Activated T-helper 2 cell treated with anti-CD3 and anti-CD28 coated beads, Interferon-gamma antibody, Interleukin-2, Interleukin-4, amounts not matched to agents 10 μg/mL and 5 μg/mL and 100 μg/mL, durations not matched to agents 14 hours and 24 hours and 36 hours (primary cell): ENCODE measurements at regions of chr10 and their contacts with region 1.

Region 1: GRCh38 chr10:131885391-131886161 is 15.2 kb upstream of the PPP2R2D start:
- DNase-seq: peak; percentile 73
- H3K4me3 Mint-ChIP-seq: no peak overlapping the region
- H3K27ac Mint-ChIP-seq: no peak overlapping the region
- H3K4me1 Mint-ChIP-seq: peaks cover 2% of the 10 kb centered on the region
- H3K27me3 Mint-ChIP-seq: peaks cover 10% of the 10 kb centered on the region

Region 2: DNA sequence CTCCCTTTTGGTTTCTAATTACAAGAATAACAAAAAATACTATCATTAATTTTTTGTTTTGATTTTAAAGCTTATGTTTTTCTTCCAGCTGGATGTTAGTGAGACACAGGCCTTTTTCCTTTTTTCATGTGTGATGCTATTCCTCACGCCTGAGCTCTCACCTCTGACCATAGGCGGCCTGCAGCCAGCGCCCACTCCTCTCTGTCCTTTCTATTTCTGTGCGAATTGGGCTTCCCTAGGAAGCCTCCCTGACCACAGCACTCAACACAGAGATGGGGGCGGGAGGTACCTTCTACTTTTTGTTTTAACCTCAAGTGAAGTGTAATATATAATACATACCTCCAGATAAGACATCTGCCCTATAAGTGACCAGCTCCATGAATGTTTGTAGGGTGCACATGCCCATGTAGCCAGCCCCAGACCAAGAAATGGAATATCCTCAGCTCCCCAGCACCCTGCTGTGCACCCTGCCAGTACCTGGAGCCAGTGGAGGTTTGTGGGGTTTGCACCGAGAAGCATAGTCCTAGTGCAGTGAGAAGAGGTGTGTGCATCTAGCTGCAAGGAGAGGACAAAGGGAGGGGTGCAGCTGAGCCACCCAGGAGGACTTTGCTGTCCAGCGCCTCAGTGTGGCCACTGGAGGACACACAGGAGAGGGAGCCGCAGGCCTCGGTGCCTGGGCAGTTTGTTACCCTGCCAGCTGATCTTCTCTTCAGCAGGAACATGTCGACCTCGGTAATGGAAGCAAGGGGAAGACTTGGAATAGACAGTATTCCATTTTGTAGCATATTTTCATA is 57.6 kb after region 1 on chr10:
- intact Hi-C with region 1: loop called (anchors 2 kb)
- DNase-seq: no peak
- H3K4me3 Mint-ChIP-seq: no peak overlapping the region
- H3K27ac Mint-ChIP-seq: no peak overlapping the region
- H3K4me1 Mint-ChIP-seq: peaks cover 4% of the 10 kb centered on the region
- H3K27me3 Mint-ChIP-seq: no peaks in the 10 kb centered on the region

Region 3: DNA sequence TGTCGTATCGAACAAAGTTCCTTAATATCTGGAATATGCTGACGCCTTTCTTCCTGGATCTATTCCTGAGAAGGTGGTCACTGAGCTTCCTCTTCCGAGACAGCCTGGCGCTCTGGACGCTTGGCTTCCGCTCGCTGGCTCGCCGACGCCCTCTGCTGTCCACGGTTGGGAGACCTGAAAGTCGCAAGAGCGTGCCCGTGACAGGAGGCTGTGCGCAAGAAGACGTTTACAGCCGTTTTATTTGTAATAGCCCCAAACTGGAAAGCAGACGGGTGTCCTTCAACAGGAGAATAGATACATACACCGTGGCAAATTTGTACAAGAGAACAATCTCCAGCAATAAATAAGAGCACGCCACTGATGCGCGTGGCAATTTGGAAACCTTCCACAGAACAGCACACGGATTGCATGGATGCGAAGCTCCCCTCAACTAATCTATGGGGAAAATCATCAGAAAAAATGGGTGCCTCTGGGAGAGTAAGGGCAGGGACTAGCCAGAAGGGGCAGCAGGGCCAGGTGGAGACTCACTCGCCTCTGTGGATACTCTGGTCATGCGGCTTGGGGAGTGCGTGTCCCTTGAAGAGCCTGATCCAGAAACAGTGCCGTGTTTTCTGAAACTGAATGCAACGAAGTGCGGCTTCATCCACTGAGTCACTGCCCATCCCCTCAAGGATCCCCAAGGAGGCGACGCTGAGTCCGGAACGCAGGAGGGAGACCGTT is 137.7 kb after region 1 on chr10:
- intact Hi-C with region 1: loop called (anchors 1 kb)
- DNase-seq: peak; percentile 59
- H3K4me3 Mint-ChIP-seq: no peak overlapping the region
- H3K27ac Mint-ChIP-seq: no peak overlapping the region
- H3K4me1 Mint-ChIP-seq: peaks cover 4% of the 10 kb centered on the region
- H3K27me3 Mint-ChIP-seq: peaks cover 24% of the 10 kb centered on the region

Region 4: DNA sequence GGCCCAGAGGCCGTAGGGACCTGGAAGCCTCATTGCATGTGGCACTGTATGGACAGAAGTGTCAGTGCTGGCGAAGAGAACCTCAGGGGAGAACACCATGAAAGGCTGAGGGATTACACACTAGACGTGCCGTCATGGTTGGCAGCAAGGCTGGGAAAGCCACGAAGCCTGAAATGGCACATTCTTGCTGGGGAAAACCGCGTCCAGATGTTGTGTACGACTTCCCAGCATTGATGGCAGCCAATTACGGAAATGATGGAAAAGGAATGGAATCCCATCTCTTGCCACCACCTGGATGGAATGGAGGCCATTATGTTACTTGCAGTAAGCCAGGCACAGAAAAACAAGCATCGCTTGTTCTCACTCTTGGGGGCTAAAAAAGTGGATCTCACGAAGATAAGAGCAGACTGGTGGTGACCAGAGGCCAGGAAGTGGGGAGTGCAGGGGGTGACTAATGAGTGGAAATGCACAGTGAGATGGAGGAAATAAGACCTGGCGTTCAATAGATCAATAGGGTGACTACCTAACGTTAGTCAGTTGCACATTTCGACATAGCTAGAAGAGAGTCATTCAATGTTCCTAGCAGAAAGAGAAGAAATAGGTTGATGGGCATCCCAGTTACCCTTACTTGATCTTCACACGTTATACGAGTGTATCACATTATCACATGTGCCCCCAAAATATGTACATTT is 496.8 kb after region 1 on chr10:
- intact Hi-C with region 1: no loop called
- DNase-seq: no peak
- H3K4me3 Mint-ChIP-seq: no peak overlapping the region
- H3K27ac Mint-ChIP-seq: no peak overlapping the region
- H3K4me1 Mint-ChIP-seq: peaks cover 10% of the 10 kb centered on the region
- H3K27me3 Mint-ChIP-seq: no peaks in the 10 kb centered on the region